Breast epithelium (tissue), 4 donors: ENCODE measurements at regions of chr4 and their contacts with region 1.

Region 1: GRCh38 chr4:101527188-101527587 is 179.9 kb upstream of the PPP3CA start:
- DNase-seq: no peak
- H3K4me3 ChIP-seq: no peak overlapping the region
- H3K27ac ChIP-seq: no peak overlapping the region
- H3K4me1 ChIP-seq: no peaks in the 10 kb centered on the region
- H3K27me3 ChIP-seq: no peaks in the 10 kb centered on the region
- CTCF ChIP-seq: no peak
- POLR2A ChIP-seq: no peak

Region 2: DNA sequence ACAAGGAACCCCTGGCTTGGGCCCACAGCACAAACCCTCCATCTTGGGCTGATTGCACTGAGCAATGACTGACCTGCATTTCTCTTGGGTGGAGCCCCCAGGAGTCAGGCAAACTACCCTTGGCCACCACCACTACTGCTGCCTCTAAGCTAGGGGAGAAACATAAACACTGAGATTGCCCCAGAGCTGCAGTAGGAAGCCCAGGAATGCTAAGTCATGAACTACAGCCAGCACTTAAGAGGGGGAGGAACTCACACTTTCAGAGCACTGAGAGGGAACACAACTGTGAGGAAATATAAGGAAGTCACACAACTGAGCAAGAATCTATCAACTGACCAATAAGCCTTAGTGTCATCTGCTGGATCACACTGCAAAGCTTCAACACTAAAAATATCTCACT is 68.3 kb before region 1 on chr4:
- intact Hi-C with region 1: no loop called
- DNase-seq: no peak
- H3K4me3 ChIP-seq: no peak overlapping the region
- H3K27ac ChIP-seq: no peak overlapping the region
- H3K4me1 ChIP-seq: no peaks in the 10 kb centered on the region
- H3K27me3 ChIP-seq: no peaks in the 10 kb centered on the region
- CTCF ChIP-seq: no peak
- POLR2A ChIP-seq: no peak

Region 3: GRCh38 chr4:101475246-101475645 is 51.9 kb before region 1 on chr4:
- intact Hi-C with region 1: loop called (anchors 2 kb)
- DNase-seq: no peak
- H3K4me3 ChIP-seq: no peak overlapping the region
- H3K27ac ChIP-seq: no peak overlapping the region
- H3K4me1 ChIP-seq: no peaks in the 10 kb centered on the region
- H3K27me3 ChIP-seq: no peaks in the 10 kb centered on the region
- CTCF ChIP-seq: no peak
- POLR2A ChIP-seq: no peak